ENCODE measurements at regions of chr3 and their contacts with region 1.

Region 1: DNA sequence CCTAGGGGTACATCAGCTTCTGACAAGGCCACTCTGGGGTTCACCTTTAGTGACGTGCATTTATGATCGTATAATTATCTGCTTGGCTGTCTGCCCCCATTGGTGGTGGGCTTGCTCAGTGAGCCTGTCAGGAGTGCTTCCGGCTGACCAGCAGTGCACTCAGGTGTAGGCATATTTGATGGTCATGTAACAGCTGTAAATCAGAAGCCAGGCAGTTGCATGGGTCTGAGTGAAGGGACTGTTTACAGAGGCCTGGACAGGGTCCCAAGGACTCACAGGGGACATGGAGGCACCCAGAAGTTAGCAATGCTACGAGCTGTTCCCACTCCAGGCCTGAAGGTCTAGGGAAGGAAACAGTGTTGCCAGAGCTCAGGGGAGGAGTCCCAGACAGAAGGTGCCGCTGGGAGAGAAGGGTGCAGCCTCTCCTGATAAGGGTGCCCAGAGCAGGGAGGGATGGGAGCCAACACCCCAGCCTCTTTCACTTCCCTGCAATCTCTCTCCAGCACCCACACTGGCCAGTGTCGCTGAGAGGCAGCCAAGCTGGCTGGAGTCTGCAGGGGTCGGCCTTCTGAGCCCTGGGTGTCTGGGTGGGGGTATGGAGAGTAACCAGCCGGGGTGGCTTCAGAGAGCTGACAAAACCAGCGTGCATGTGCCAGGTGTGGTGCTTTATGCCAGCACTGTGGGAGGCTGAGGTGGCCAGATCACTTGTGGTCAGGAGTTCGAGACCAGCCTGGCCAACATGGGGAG is 61.3 kb upstream of the PRR23E start:
- DNase-seq: no peak
- H3K4me3 ChIP-seq: no peak overlapping the region
- H3K27ac ChIP-seq: no peak overlapping the region
- H3K4me1 ChIP-seq: peaks cover 26% of the 10 kb centered on the region
- H3K27me3 ChIP-seq: no peaks in the 10 kb centered on the region
- CTCF ChIP-seq: no peak
- POLR2A ChIP-seq: no peak

Region 2: GRCh38 chr3:126245811-126246727 is 885.5 kb before region 1 on chr3:
- intact Hi-C with region 1: loop called (anchors 5 kb)
- DNase-seq: no peak
- H3K4me3 ChIP-seq: no peak overlapping the region
- H3K27ac ChIP-seq: no peak overlapping the region
- H3K4me1 ChIP-seq: no peaks in the 10 kb centered on the region
- H3K27me3 ChIP-seq: no peaks in the 10 kb centered on the region
- CTCF ChIP-seq: peak in 1 of 3 experiments; percentile 39
- POLR2A ChIP-seq: no peak

Region 3: DNA sequence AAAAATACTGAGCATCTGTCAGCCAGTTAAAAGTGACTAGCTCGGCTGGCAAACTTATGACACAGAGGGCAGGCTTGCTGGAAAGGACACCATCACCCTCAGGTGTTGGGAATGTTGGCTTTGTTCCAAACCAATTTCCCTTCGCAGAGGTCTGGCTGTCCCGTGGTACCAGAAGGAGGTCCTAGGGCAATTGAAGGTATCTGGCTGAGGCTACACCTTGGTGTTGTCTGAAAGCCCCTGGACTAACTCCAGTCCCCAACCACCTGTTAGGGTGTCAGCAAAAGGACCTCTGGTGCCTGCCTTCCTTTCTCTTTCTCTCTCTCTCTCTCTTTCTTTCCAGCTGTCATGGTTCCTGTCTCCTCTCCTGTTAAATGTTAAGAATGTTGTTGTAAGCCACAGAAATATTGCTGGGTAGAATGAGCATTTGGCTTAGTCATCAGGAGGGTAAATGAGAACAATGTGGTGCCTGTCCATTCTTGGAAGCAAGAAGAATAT is 143.7 kb after region 1 on chr3:
- intact Hi-C with region 1: no loop called
- DNase-seq: no peak
- H3K4me3 ChIP-seq: no peak overlapping the region
- H3K27ac ChIP-seq: no peak overlapping the region
- H3K4me1 ChIP-seq: no peaks in the 10 kb centered on the region
- H3K27me3 ChIP-seq: no peaks in the 10 kb centered on the region
- CTCF ChIP-seq: no peak
- POLR2A ChIP-seq: no peak

Measured in vagina (tissue), 2 donors.